Naive thymus-derived CD4-positive, alpha-beta T cell (primary cell): ENCODE measurements at regions of chr12 and their contacts with region 1.

Region 1: GRCh38 chr12:45215419-45216229 is at the start of gene ANO6:
- DNase-seq: peak; percentile 58 to 85 (median 71)
- ATAC-seq: peak; percentile 86
- H3K4me3 ChIP-seq: peak within 1 kb of the TSS; percentile 83
- H3K4me3 Mint-ChIP-seq: peak within 1 kb of the TSS; percentile 90 to 99 (median 97)
- H3K27ac ChIP-seq: peak within 1 kb of the TSS; percentile 69
- H3K27ac Mint-ChIP-seq: peak within 1 kb of the TSS; percentile 83 to 96 (median 95)
- H3K4me1 ChIP-seq: peaks cover 17% of the 10 kb centered on the region in 2 donors
- H3K4me1 Mint-ChIP-seq: peaks cover 26 to 70% (median 59%) of the 10 kb centered on the region in 7 donors
- H3K27me3 ChIP-seq: no peaks in the 10 kb centered on the region
- H3K27me3 Mint-ChIP-seq: no peaks in the 10 kb centered on the region
- total RNA-seq, gene ANO6: 15.1 to 29.7 (median 25.3) TPM

Region 2: DNA sequence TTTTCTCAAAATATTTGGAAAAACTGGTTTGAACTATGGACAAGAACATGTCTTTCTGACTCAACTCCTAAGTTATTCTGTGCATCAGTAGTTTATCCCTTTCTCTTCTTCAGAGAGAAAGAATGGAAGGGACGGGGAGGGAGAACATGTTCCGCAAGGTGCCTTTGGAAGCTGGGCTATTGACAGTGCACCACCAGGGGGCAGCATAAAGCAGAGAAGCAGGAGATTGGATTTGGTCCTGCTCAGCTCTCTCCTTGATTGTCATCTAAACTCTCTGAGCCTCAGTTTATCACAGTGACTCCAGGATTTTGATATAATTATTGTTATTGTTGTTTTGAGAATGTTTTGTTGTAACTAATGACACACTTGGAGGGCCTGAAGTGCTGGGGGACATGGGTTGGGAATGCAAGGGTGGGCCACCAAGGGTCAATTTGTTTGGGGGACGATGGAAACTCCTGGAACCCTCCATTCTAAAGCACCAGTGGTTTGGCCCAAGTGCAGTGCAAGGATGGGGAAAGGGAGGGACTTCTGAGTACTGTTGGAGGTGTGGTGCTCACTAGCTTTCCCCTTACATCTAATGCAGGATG is 45.1 kb before region 1 on chr12:
- CTCF ChIA-PET with region 1: interaction called, 5 read pairs
- POLR2A ChIA-PET with region 1: interaction called, 3 read pairs
- intact Hi-C with region 1: loop called (anchors 1 to 2 kb)
- DNase-seq: peak; percentile 42 to 77 (median 63)
- ATAC-seq: peak; percentile 76
- H3K4me3 ChIP-seq: no peak overlapping the region
- H3K4me3 Mint-ChIP-seq: no peak overlapping the region
- H3K27ac ChIP-seq: no peak overlapping the region
- H3K27ac Mint-ChIP-seq: peak overlapping the region in 1 of 9 donors; percentile 4
- H3K4me1 ChIP-seq: no peaks in the 10 kb centered on the region
- H3K4me1 Mint-ChIP-seq: peaks cover 0 to 4% (median 0%) of the 10 kb centered on the region in 7 donors
- H3K27me3 ChIP-seq: no peaks in the 10 kb centered on the region
- H3K27me3 Mint-ChIP-seq: peaks cover 0 to 7% (median 4%) of the 10 kb centered on the region in 5 donors

Region 3: DNA sequence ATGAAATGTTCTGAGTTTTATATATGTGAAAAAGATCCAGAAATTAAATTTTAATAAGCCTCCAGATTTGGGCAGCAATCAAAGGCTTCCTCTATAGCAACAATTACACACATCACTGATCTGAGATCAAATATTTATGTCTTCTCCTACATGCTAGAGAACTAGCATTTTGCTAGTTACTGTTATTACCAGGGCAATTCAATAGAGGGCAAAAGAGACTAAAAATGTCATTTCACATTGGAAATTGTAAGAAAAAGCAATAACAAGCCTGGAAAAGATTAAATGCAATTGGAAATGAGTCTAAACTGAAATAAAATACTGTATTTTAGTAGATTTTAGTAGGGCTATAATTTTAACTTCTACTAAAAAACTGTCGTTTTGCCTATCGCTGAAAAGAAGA is 32.4 kb before region 1 on chr12:
- CTCF ChIA-PET with region 1: no interaction called
- POLR2A ChIA-PET with region 1: no interaction called
- intact Hi-C with region 1: loop called in 1 of 2 experiments (anchors 2 kb)
- DNase-seq: peak in 2 of 9 donors; percentile 9 to 10
- ATAC-seq: no peak
- H3K4me3 ChIP-seq: no peak overlapping the region
- H3K4me3 Mint-ChIP-seq: no peak overlapping the region
- H3K27ac ChIP-seq: no peak overlapping the region
- H3K27ac Mint-ChIP-seq: no peak overlapping the region
- H3K4me1 ChIP-seq: no peaks in the 10 kb centered on the region
- H3K4me1 Mint-ChIP-seq: peaks cover 0 to under 1% (median 0%) of the 10 kb centered on the region in 7 donors
- H3K27me3 ChIP-seq: no peaks in the 10 kb centered on the region
- H3K27me3 Mint-ChIP-seq: no peaks in the 10 kb centered on the region

Region 4: DNA sequence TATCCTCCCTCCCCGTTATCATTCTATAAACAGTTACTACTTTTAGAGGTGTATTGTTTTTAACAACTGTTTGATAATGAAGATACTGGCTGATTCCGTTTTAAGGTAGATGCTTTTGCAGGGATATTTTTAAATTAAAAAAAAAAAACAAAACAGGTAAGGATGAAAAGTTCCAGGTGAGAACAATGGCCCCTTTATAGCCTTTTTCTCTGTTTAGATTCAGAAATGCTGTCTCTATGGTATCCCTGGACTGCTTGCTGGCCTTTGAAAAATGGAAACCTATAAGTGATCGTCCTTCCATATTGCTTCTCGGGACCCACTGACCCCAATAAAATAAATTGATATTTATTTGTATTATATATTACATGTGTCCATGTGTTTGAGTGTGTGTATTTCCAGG is 22.9 kb before region 1 on chr12:
- CTCF ChIA-PET with region 1: interaction called, 3 read pairs
- POLR2A ChIA-PET with region 1: interaction called, 3 read pairs
- intact Hi-C with region 1: loop called in 1 of 2 experiments (anchors 1 kb)
- DNase-seq: no peak
- ATAC-seq: no peak
- H3K4me3 ChIP-seq: no peak overlapping the region
- H3K4me3 Mint-ChIP-seq: no peak overlapping the region
- H3K27ac ChIP-seq: no peak overlapping the region
- H3K27ac Mint-ChIP-seq: peak overlapping the region in 3 of 9 donors; percentile 11 to 64 (median 40)
- H3K4me1 ChIP-seq: no peaks in the 10 kb centered on the region
- H3K4me1 Mint-ChIP-seq: peaks cover 0 to 9% (median 6%) of the 10 kb centered on the region in 7 donors
- H3K27me3 ChIP-seq: no peaks in the 10 kb centered on the region
- H3K27me3 Mint-ChIP-seq: no peaks in the 10 kb centered on the region

Region 5: GRCh38 chr12:45200491-45201043 is 15.1 kb before region 1 on chr12:
- CTCF ChIA-PET with region 1: interaction called, 8 read pairs
- POLR2A ChIA-PET with region 1: interaction called, 8 read pairs
- intact Hi-C with region 1: loop called in 1 of 2 experiments (anchors 2 kb)
- DNase-seq: peak in 4 of 9 donors; percentile 6 to 18 (median 10)
- ATAC-seq: peak; percentile 57
- H3K4me3 ChIP-seq: no peak overlapping the region
- H3K4me3 Mint-ChIP-seq: peak overlapping the region; percentile 28 to 78 (median 66)
- H3K27ac ChIP-seq: no peak overlapping the region
- H3K27ac Mint-ChIP-seq: peak overlapping the region in 8 of 9 donors; percentile 21 to 83 (median 57)
- H3K4me1 ChIP-seq: peaks cover 0 to 22% of the 10 kb centered on the region in 2 donors
- H3K4me1 Mint-ChIP-seq: peaks cover 13 to 34% (median 28%) of the 10 kb centered on the region in 7 donors
- H3K27me3 ChIP-seq: no peaks in the 10 kb centered on the region
- H3K27me3 Mint-ChIP-seq: no peaks in the 10 kb centered on the region

Region 6: GRCh38 chr12:45226021-45226420 is 10.4 kb after region 1 on chr12:
- CTCF ChIA-PET with region 1: interaction called, 4 read pairs
- POLR2A ChIA-PET with region 1: interaction called, 3 read pairs
- intact Hi-C with region 1: loop called in 1 of 2 experiments (anchors 1 kb)
- DNase-seq: no peak
- ATAC-seq: no peak
- H3K4me3 ChIP-seq: no peak overlapping the region
- H3K4me3 Mint-ChIP-seq: no peak overlapping the region
- H3K27ac ChIP-seq: no peak overlapping the region
- H3K27ac Mint-ChIP-seq: no peak overlapping the region
- H3K4me1 ChIP-seq: no peaks in the 10 kb centered on the region
- H3K4me1 Mint-ChIP-seq: peaks cover 13 to 54% (median 38%) of the 10 kb centered on the region in 7 donors
- H3K27me3 ChIP-seq: no peaks in the 10 kb centered on the region
- H3K27me3 Mint-ChIP-seq: no peaks in the 10 kb centered on the region